ENCODE measurements at regions of chr2 and their contacts with region 1.

Region 1: DNA sequence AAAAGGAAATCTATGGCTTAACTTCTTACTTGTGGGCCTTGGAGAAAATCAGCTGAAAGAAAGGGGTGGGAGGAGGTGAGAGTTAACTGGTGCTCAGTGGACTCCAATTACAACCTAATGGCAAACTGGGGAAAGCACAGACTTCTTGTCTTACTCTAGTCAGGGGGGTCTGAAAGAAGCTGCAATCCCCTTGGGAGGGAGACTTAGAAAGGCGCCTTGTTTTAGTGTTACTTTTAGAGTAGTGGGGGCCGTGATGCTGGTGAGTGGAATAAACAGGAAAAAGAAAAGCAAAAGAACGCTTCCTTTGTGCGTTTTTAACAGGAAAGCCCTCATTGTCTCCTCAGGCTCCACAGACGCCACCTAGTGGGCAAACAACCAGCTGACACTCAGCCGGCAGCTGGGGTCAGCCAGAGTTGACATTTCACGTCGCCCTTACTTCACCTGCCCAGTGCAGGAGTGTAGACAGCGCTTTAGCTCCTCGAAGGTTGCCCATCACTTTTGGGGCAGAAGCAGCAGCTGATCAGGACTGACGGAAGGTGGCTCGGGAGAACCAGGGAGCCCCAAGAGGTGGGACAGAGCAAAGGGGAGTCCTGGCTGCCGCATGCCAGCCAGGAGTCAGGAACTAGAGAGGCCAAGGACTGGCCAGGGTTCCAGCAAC is 55.9 kb upstream of the GORASP2 start:
- DNase-seq: peak; percentile 70
- H3K4me3 Mint-ChIP-seq: peak overlapping the region; percentile 64
- H3K27ac Mint-ChIP-seq: peak overlapping the region; percentile 82
- H3K4me1 Mint-ChIP-seq: peaks cover 13% of the 10 kb centered on the region
- H3K27me3 Mint-ChIP-seq: peaks cover 3% of the 10 kb centered on the region

Region 2: DNA sequence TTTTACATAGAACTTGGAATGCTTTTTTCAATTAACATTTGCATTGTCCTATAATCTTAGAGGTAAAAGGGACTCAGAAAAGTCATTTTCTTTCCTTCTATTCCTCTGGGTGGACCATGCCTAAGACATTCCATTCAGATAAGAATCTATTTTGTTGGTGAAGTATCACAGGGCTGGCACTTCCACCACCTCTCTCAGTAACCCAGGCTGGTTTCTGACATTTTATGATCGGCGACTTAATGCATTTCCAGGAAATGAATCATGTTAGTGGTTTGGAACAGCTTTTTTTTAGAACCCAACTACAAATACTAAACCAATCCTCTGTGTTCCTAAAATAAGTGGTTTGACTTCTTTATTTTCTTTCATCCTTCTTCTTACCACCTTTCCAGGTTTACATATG is 29.5 kb before region 1 on chr2:
- intact Hi-C with region 1: loop called (anchors 2 kb)
- DNase-seq: no peak
- H3K4me3 Mint-ChIP-seq: peak overlapping the region; percentile 28
- H3K27ac Mint-ChIP-seq: no peak overlapping the region
- H3K4me1 Mint-ChIP-seq: peaks cover 33% of the 10 kb centered on the region
- H3K27me3 Mint-ChIP-seq: no peaks in the 10 kb centered on the region

Measured in activated T-helper 2 cell treated with anti-CD3 and anti-CD28 coated beads, Interferon-gamma antibody, Interleukin-2, Interleukin-4, amounts not matched to agents 10 μg/mL and 5 μg/mL and 100 μg/mL, durations not matched to agents 14 hours and 24 hours and 36 hours (primary cell).